GM12878 (cell line): ENCODE measurements at regions of chr1 and their contacts with region 1.

Region 1: DNA sequence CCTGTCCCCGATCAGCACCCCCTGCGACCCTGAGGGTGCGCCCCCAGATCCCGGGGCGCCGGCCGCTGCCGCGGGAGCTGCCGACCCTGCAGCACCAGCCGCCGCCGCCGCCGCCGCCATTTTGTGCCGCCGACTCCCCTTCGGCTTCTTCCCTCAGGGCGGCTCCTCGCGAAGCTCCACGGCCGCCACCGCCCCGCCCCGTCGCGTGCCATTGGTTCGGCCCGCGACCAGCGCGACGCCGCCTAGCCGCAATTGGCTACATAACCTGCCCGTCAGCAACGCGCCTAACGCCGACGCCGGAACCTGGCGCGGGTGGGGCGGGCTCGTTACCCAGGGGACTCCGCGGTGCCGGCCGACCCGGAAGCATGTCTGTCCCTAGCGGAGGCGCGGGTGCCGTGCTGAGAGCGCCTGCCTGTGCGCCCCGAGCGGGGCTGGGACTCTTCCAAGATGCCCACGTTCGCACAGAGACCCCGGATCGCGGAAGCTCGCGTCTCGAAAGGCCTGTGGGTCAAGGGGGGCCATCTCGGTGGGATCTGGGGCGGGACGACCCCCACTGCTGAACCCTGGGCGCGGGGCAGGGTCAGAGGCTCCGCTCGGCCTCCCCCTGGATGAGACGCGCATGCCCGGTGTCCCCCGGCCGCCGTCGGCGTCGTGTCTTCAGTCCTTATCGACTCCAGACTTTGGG is at the start of gene CCNL2:
- DNase-seq: peak; percentile 91
- ATAC-seq: peak; percentile 97
- H3K4me3 ChIP-seq: peak within 1 kb of the TSS; percentile 91
- H3K27ac ChIP-seq: peak within 1 kb of the TSS; percentile 84
- H3K4me1 ChIP-seq: peaks cover 26% of the 10 kb centered on the region
- H3K27me3 ChIP-seq: no peaks in the 10 kb centered on the region
- CTCF ChIP-seq: peak; percentile 38 to 71 (median 55); a peak in 5 of 6 replicates
- EP300 ChIP-seq: no peak
- POLR2A ChIP-seq: peak; percentile 88
- RAD21 ChIP-seq: no peak
- polyA plus RNA-seq, gene CCNL2: 2.1 to 5.5 TPM

Region 2: GRCh38 chr1:1349256-1350012 is 49.9 kb before region 1 on chr1 and contains the start of gene DVL1:
- CTCF ChIA-PET with region 1: no interaction called
- POLR2A ChIA-PET with region 1: no interaction called
- RAD21 ChIA-PET with region 1: no interaction called
- SMC1A ChIA-PET with region 1: no interaction called
- in situ Hi-C with region 1: no loop called
- intact Hi-C with region 1: loop called (anchors 2 kb)
- DNase-seq: no peak
- ATAC-seq: peak; percentile 58
- H3K4me3 ChIP-seq: peak within 1 kb of the TSS; percentile 83
- H3K27ac ChIP-seq: peak within 1 kb of the TSS; percentile 80
- H3K4me1 ChIP-seq: peaks cover 6% of the 10 kb centered on the region; the same call in 1 of the 2 replicates
- H3K27me3 ChIP-seq: peaks cover 0 to 2% of the 10 kb centered on the region in 2 experiments; a peak in 2 of 4 replicates
- CTCF ChIP-seq: peak; percentile 34 to 60 (median 44)
- EP300 ChIP-seq: no peak
- POLR2A ChIP-seq: peak; percentile 68
- RAD21 ChIP-seq: peak; percentile 57
- polyA plus RNA-seq, gene DVL1: 0.10 to 0.53 TPM

Region 3: DNA sequence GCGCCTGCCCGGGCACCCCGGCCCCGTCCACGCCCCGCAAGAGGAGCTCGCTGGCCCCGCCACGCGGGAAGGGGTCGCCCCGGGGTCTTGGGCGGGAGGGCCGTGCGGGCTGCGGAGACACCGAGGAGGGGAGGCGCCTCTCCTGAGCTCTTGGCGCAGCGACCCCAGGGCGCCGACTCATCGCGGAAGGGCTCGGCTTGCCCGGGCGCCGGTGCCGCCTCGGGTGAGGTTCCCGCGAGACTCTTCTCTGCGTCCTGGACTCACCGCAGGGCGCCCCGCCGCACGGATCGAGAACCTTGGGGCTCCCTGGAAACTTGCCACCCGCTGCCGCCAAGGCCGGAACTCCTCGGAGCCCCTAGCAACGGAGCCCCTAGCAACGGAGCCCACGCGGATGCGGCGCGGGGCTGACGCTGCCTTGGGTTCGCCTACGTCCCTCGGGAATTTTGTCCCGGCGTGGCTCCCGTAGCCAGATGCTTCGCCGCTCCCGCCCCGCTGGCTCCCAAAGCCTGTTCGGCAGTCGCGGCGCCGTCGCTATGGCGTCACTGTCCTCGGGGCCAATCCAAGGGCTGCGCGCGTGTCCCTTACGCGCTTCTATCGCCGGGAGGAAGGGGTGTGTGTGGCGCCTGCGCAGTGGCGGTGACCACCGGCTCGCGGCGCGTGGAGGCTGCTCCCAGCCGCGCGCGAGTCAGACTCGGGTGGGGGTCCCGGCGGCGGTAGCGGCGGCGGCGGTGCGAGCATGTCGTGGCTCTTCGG is 112.4 kb after region 1 on chr1 and contains the start of gene ATAD3A:
- CTCF ChIA-PET with region 1: interaction called, 3 read pairs
- POLR2A ChIA-PET with region 1: interaction called, 4 read pairs
- RAD21 ChIA-PET with region 1: no interaction called
- SMC1A ChIA-PET with region 1: no interaction called
- in situ Hi-C with region 1: loop called (anchors 5 kb)
- intact Hi-C with region 1: no loop called
- DNase-seq: peak; percentile 84
- ATAC-seq: peak; percentile 94
- H3K4me3 ChIP-seq: peak within 1 kb of the TSS; percentile 76
- H3K27ac ChIP-seq: peak within 1 kb of the TSS; percentile 95
- H3K4me1 ChIP-seq: no peaks in the 10 kb centered on the region
- H3K27me3 ChIP-seq: no peaks in the 10 kb centered on the region
- CTCF ChIP-seq: no peak
- EP300 ChIP-seq: no peak
- POLR2A ChIP-seq: peak; percentile 74; the same call in 1 of the 2 replicates
- RAD21 ChIP-seq: no peak
- polyA plus RNA-seq, gene ATAD3A: 0.05 to 1.3 TPM